ENCODE measurements at regions of chr1 and their contacts with region 1.

Region 1: DNA sequence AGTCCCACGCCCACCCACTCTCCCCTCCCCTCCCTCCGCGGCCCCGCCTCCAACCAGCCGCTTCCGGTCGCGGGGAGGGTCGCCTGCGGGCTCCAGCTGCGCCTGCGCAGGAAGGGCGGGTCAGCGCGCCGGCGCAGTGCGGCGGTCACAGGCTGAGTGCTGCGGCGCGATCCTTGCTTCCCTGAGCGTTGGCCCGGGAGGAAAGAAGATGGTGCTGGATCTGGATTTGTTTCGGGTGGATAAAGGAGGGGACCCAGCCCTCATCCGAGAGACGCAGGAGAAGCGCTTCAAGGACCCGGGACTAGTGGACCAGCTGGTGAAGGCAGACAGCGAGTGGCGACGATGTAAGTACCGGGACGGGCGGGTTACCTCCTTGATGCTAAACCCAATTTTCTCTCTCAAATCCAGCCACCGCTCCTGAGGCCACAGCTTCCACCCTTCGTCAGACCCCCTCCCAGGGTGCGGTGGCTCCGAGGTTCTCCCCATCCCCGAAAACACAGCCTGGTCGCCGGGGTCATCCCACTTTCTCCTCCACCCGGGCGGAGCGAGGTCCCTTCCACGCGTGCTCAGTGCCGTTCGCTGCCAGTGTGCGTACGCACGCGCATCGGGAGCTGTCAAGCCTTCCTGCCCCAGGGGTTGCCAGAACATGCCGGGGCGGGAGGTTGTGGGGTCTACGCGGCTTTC is at the start of gene SARS1:
- DNase-seq: peak; percentile 89
- H3K4me3 Mint-ChIP-seq: peak within 1 kb of the TSS; percentile 97
- H3K27ac Mint-ChIP-seq: peak within 1 kb of the TSS; percentile 95
- H3K4me1 Mint-ChIP-seq: peaks cover 35% of the 10 kb centered on the region
- H3K27me3 Mint-ChIP-seq: no peaks in the 10 kb centered on the region
- total RNA-seq, gene SARS1: 138 to 140 TPM

Region 2: GRCh38 chr1:109197163-109198042 is 16.5 kb before region 1 on chr1:
- CTCF ChIA-PET with region 1: interaction called, 11 read pairs
- POLR2A ChIA-PET with region 1: no interaction called
- DNase-seq: no peak
- H3K4me3 Mint-ChIP-seq: no peak overlapping the region
- H3K27ac Mint-ChIP-seq: peak overlapping the region; percentile 37
- H3K4me1 Mint-ChIP-seq: peaks cover 35% of the 10 kb centered on the region
- H3K27me3 Mint-ChIP-seq: no peaks in the 10 kb centered on the region

Region 3: GRCh38 chr1:109226078-109226445 is 12.1 kb after region 1 on chr1:
- CTCF ChIA-PET with region 1: interaction called, 10 read pairs
- POLR2A ChIA-PET with region 1: interaction called, 3 read pairs
- DNase-seq: no peak
- H3K4me3 Mint-ChIP-seq: no peak overlapping the region
- H3K27ac Mint-ChIP-seq: no peak overlapping the region
- H3K4me1 Mint-ChIP-seq: peaks cover 16% of the 10 kb centered on the region
- H3K27me3 Mint-ChIP-seq: no peaks in the 10 kb centered on the region

Region 4: GRCh38 chr1:109466452-109467300 is 252.7 kb after region 1 on chr1 and contains the start of gene SYPL2:
- CTCF ChIA-PET with region 1: no interaction called
- POLR2A ChIA-PET with region 1: no interaction called
- DNase-seq: no peak
- H3K4me3 Mint-ChIP-seq: peak within 1 kb of the TSS; percentile 58
- H3K27ac Mint-ChIP-seq: no peak within 1 kb of the TSS
- H3K4me1 Mint-ChIP-seq: peaks cover 11% of the 10 kb centered on the region
- H3K27me3 Mint-ChIP-seq: peaks cover 79% of the 10 kb centered on the region
- total RNA-seq, gene SYPL2: not detected